Breast epithelium (tissue), 4 donors: ENCODE measurements at regions of chr1 and their contacts with region 1.

Region 1: GRCh38 chr1:54774820-54775498 is 10.6 kb upstream of the PARS2 start:
- DNase-seq: no peak
- H3K4me3 ChIP-seq: no peak overlapping the region
- H3K27ac ChIP-seq: no peak overlapping the region
- H3K4me1 ChIP-seq: no peaks in the 10 kb centered on the region
- H3K27me3 ChIP-seq: no peaks in the 10 kb centered on the region
- CTCF ChIP-seq: no peak
- POLR2A ChIP-seq: no peak

Region 2: GRCh38 chr1:54558434-54559030 is 216.4 kb before region 1 on chr1:
- intact Hi-C with region 1: loop called (anchors 10 kb)
- DNase-seq: no peak
- H3K4me3 ChIP-seq: no peak overlapping the region
- H3K27ac ChIP-seq: no peak overlapping the region
- H3K4me1 ChIP-seq: no peaks in the 10 kb centered on the region
- H3K27me3 ChIP-seq: no peaks in the 10 kb centered on the region
- CTCF ChIP-seq: no peak
- POLR2A ChIP-seq: no peak

Region 3: DNA sequence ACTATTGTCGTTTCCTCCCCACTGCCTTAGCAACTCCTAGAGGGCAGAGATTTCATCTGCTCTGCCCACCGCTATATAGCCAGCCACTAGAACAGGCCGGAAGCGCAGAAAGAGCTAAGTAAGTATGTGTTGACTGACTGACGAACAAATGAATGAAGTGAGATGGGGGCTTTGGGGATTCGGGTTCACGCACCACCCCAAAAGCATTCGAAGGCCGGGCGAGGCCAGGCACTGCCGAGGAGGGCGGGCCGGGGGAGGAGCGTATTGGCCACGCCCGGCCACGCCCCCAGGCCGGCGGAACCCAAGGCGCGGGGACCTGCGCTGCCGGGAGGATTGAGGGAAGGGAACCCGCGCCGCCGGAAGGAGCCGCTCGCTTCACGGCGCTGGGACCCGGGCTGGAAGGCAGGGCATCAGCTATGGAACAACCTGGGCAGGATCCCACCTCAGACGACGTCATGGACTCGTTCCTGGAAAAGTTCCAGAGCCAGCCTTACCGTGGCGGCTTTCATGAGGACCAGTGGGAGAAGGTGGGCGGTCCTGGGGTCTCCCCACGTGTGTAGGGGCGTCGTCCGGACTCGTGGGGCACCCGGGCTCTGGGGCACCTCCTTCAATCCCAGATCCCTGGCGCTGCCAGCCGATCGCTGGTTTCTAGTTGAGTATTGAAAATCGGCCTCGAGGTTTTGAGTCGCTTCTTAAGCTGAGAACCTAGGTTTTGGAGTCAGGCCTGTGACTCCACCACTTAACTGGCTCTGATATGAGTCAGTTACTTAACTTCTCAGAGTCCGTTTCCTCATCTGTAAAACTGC is 59.3 kb before region 1 on chr1 and contains the start of gene TTC4:
- intact Hi-C with region 1: no loop called
- DNase-seq: peak; percentile 71 to 78
- H3K4me3 ChIP-seq: peak within 1 kb of the TSS; percentile 71 to 80 (median 79)
- H3K27ac ChIP-seq: peak within 1 kb of the TSS; percentile 64 to 81
- H3K4me1 ChIP-seq: peaks cover 5 to 6% of the 10 kb centered on the region in 2 donors
- H3K27me3 ChIP-seq: no peaks in the 10 kb centered on the region
- CTCF ChIP-seq: no peak
- POLR2A ChIP-seq: no peak
- total RNA-seq, gene TTC4: 18.2 to 33.8 (median 26.9) TPM